Cardiac septum (tissue), 1 donor: ENCODE measurements at regions of chr11 and their contacts with region 1.

Region 1: GRCh38 chr11:94910779-94911178 is 62.6 kb downstream of the CWC15 start:
- DNase-seq: no peak

Region 2: GRCh38 chr11:94958121-94958696 is 47.4 kb after region 1 on chr11:
- intact Hi-C with region 1: loop called (anchors 5 kb)
- DNase-seq: no peak

Region 3: DNA sequence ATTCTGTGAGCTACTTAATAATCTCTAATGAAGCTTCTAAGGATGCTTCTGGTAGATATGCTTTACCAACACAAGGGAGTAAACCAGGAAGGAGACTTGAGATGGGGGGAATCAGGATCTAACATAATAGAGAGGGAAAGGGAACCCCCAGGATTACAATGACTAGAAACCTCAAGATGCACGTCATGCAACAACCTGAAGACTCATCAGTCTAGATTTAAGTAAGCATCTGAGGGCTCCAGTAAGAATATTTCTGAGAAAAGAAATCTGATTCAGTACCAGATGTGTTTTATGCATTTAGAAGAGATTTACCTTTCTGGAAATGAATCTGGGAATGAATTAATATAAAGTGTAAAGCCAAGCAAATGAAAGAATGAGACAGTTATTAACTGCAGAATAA is 78.0 kb after region 1 on chr11:
- intact Hi-C with region 1: no loop called
- DNase-seq: no peak